Heart left ventricle (tissue), 16 donors: ENCODE measurements at regions of chr17 and their contacts with region 1.

Region 1: DNA sequence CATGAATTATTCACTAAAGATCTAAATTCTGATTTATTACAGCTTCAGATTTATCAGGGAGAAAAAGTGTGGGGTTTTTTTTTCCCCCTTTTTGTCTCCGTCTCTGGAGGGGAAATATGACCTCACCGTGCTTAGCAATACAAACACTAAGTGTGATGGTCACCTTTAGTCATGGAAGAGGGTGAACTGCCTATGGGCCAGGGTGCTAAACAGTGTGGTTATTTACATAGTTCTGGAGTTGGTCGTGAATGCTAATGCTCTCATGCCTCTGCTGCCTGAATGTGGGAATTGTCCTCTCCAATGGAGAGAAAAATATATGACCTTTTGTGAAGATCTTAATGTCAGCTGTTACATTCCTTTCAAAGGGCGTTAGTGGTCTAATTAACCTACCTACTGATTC is 44.8 kb upstream of the MSI2 start:
- DNase-seq: no peak
- ATAC-seq: no peak
- H3K4me3 ChIP-seq: no peak overlapping the region
- H3K27ac ChIP-seq: no peak overlapping the region
- H3K4me1 ChIP-seq: no peaks in the 10 kb centered on the region
- H3K27me3 ChIP-seq: no peaks in the 10 kb centered on the region
- CTCF ChIP-seq: no peak
- POLR2A ChIP-seq: no peak

Region 2: DNA sequence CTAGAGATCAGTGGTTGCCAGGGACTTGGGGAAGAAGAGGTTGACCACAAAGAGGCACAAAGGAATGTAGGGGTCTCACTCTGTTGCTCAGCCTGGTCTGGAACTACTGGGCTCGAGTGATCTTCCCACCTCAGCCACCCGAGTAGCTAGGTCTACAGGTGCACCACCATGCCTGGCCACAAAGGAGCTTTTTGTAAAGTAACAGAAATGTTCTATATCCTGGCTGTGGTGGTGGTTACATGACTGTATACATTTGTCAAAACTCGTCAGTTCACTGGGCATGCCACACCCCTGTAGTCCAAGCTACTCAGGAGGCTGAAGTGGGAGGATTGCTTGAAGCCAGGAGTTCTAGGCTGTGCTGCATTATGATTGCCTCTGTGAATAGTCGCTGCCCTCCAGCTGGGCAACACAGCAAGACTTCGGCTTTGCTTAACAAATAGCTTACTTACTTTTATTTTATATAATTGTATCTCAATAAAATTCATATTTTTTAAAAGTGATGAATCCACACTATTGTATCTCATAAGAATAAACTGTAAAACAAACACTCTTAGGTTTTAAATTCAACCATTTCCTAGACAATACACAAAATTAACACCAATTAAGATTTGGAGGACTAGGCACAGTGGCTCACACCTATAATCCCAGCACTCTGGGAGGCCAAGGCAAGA is 1938.4 kb after region 1 on chr17:
- intact Hi-C with region 1: loop called in 1 of 10 experiments (anchors 10 kb)
- DNase-seq: no peak
- ATAC-seq: no peak
- H3K4me3 ChIP-seq: no peak overlapping the region
- H3K27ac ChIP-seq: no peak overlapping the region
- H3K4me1 ChIP-seq: peaks cover 0 to 29% (median 10%) of the 10 kb centered on the region in 12 donors
- H3K27me3 ChIP-seq: no peaks in the 10 kb centered on the region
- CTCF ChIP-seq: no peak
- POLR2A ChIP-seq: no peak